Activated naive CD4-positive, alpha-beta T cell treated with anti-CD3 and anti-CD28 coated beads for 36 hours (primary cell): ENCODE measurements at regions of chr16 and their contacts with region 1.

Region 1: GRCh38 chr16:15949210-15950160 is at the start of gene ABCC1:
- DNase-seq: peak; percentile 46
- H3K4me3 Mint-ChIP-seq: peak within 1 kb of the TSS; percentile 95
- H3K27ac Mint-ChIP-seq: peak within 1 kb of the TSS; percentile 96
- H3K4me1 Mint-ChIP-seq: peaks cover 50% of the 10 kb centered on the region
- H3K27me3 Mint-ChIP-seq: no peaks in the 10 kb centered on the region
- total RNA-seq, gene ABCC1: 40.3 to 41.0 TPM

Region 2: DNA sequence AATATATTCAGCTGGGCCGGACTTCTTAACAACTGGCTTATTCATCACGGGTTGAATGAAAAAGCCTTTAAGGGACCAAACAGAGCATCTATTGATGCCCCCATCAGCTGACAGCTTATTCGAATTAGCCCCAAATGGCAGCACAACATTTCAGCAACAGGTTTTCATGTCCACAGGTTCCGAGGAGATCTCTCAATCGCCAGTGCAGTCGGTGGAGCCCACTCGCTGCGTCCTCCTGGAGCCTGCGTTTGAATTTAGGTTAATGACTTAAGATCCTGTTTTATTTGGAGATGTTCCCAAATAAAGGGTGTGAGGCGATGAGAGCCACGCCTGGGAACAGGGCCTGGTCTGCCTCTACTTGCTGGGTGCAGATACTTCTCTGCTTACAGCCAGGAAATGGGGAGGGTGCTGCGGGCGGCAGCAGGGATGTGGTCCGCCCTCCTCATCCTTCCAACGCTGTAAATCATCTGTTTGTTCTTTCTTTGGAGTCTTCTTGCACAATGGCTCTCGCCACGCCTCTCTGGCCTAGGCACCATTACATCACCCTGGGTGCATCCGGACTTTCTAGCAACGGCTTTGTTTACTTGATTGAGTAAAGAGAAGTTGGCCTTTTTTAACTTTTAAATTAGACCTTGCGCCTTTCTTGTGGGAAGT is 276.8 kb before region 1 on chr16:
- CTCF ChIA-PET with region 1: no interaction called
- intact Hi-C with region 1: loop called (anchors 10 kb)
- DNase-seq: peak; percentile 90
- H3K4me3 Mint-ChIP-seq: peak overlapping the region; percentile 62
- H3K27ac Mint-ChIP-seq: peak overlapping the region; percentile 89
- H3K4me1 Mint-ChIP-seq: peaks cover 43% of the 10 kb centered on the region
- H3K27me3 Mint-ChIP-seq: no peaks in the 10 kb centered on the region

Region 3: GRCh38 chr16:15888072-15888976 is 61.2 kb before region 1 on chr16 and contains the start of gene CEP20:
- CTCF ChIA-PET with region 1: no interaction called
- intact Hi-C with region 1: loop called (anchors 1 kb)
- DNase-seq: peak; percentile 100
- H3K4me3 Mint-ChIP-seq: peak within 1 kb of the TSS; percentile 100
- H3K27ac Mint-ChIP-seq: peak within 1 kb of the TSS; percentile 94
- H3K4me1 Mint-ChIP-seq: peaks cover 31% of the 10 kb centered on the region
- H3K27me3 Mint-ChIP-seq: no peaks in the 10 kb centered on the region
- total RNA-seq, gene CEP20: 49.0 to 57.0 TPM

Region 4: GRCh38 chr16:15913046-15913698 is 36.3 kb before region 1 on chr16:
- CTCF ChIA-PET with region 1: no interaction called
- intact Hi-C with region 1: no loop called
- DNase-seq: no peak
- H3K4me3 Mint-ChIP-seq: peak overlapping the region; percentile 36
- H3K27ac Mint-ChIP-seq: peak overlapping the region; percentile 76
- H3K4me1 Mint-ChIP-seq: peaks cover 12% of the 10 kb centered on the region
- H3K27me3 Mint-ChIP-seq: no peaks in the 10 kb centered on the region

Region 5: GRCh38 chr16:15961060-15961511 is 11.6 kb after region 1 on chr16:
- CTCF ChIA-PET with region 1: interaction called, 4 read pairs
- intact Hi-C with region 1: loop called (anchors 2 kb)
- DNase-seq: peak; percentile 93
- H3K4me3 Mint-ChIP-seq: peak overlapping the region; percentile 81
- H3K27ac Mint-ChIP-seq: peak overlapping the region; percentile 99
- H3K4me1 Mint-ChIP-seq: peaks cover 81% of the 10 kb centered on the region
- H3K27me3 Mint-ChIP-seq: no peaks in the 10 kb centered on the region

Region 6: GRCh38 chr16:16025214-16025968 is 75.9 kb after region 1 on chr16:
- CTCF ChIA-PET with region 1: no interaction called
- intact Hi-C with region 1: loop called (anchors 2 kb)
- DNase-seq: peak; percentile 69
- H3K4me3 Mint-ChIP-seq: no peak overlapping the region
- H3K27ac Mint-ChIP-seq: peak overlapping the region; percentile 79
- H3K4me1 Mint-ChIP-seq: peaks cover 30% of the 10 kb centered on the region
- H3K27me3 Mint-ChIP-seq: no peaks in the 10 kb centered on the region

Region 7: GRCh38 chr16:16127469-16128116 is 178.1 kb after region 1 on chr16:
- CTCF ChIA-PET with region 1: no interaction called
- intact Hi-C with region 1: loop called (anchors 2 kb)
- DNase-seq: peak; percentile 85
- H3K4me3 Mint-ChIP-seq: no peak overlapping the region
- H3K27ac Mint-ChIP-seq: peak overlapping the region; percentile 28
- H3K4me1 Mint-ChIP-seq: no peaks in the 10 kb centered on the region
- H3K27me3 Mint-ChIP-seq: no peaks in the 10 kb centered on the region

Region 8: DNA sequence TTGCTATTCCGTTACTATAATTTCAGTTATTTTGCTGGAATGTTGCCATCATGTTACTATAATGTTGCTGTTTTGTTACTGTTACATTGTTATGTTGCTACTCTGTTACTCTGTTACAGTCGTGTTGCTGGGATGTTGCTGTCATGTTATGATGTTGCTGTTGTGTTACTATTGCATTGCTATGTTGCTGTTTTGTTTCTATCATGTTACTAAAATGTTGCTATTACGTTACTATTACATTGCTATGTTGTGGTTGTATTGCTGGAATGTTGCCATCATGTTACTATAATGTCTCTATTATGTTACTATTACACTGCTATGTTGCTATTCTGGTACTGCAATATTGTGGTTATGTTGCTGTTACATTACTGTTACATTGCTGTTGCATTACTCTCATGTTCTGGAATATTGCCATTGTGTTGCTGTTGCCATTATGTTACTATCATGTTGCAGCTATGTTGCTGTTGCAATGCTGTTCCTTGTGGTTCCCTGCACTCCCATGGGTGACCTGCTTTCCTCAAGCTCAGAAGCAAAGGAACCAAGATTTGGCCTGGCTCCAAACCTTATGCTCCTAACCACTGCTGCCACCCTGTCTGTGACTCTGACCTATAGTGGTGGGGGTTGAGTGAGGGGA is 209.4 kb after region 1 on chr16:
- CTCF ChIA-PET with region 1: no interaction called
- intact Hi-C with region 1: no loop called
- DNase-seq: no peak
- H3K4me3 Mint-ChIP-seq: no peak overlapping the region
- H3K27ac Mint-ChIP-seq: no peak overlapping the region
- H3K4me1 Mint-ChIP-seq: no peaks in the 10 kb centered on the region
- H3K27me3 Mint-ChIP-seq: no peaks in the 10 kb centered on the region